CD8-positive, alpha-beta T cell (primary cell): ENCODE measurements at regions of chr17 and their contacts with region 1.

Region 1: DNA sequence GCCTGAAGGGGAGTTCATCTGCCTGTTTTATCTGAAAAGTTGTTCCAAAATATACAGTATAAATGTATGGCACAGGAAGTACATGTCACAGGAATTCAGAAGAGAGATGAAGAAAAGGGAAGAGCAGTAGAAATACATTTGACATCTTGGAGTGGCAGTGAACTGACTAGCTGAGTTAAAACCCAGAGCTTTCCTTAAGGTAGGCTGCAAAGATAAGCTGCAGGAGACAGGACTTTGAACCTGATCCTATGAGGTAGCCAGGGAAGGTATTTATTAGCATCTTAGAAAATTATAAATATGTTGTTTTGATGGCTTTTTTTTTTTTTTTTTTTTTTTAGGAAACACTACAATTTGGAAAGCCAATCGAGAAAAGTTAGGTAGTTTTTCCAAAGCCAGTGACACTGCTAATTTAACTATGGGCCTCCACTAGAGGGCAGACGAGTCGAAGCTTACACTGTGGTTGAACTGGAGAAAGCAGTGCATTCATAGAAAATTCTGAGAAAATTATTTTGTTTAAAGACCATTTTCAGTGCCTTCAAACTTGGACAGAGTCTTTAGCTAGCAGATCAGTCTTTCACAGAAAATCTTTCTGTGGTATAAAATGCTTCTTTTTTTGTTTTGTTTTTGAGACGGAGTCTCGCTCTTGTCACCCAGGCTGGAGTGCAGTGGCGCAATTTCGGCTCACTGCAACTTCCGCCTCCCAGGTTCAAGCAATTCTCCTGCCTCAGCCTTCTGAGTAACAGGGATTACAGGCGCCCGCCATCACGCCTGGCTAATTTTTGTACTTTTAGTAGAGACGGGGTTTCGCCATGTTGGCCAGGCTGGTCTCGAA is 122.3 kb downstream of the SSH2 start:
- DNase-seq: peak; percentile 30 to 81 (median 73)
- ATAC-seq: peak; percentile 81
- H3K4me3 ChIP-seq: no peak overlapping the region
- H3K4me3 Mint-ChIP-seq: no peak overlapping the region
- H3K27ac ChIP-seq: no peak overlapping the region
- H3K27ac Mint-ChIP-seq: no peak overlapping the region
- H3K4me1 ChIP-seq: no peaks in the 10 kb centered on the region
- H3K4me1 Mint-ChIP-seq: peaks cover 15% of the 10 kb centered on the region
- H3K27me3 ChIP-seq: no peaks in the 10 kb centered on the region
- H3K27me3 Mint-ChIP-seq: no peaks in the 10 kb centered on the region
- CTCF ChIP-seq: peak; percentile 94

Region 2: GRCh38 chr17:29821897-29822296 is 14.2 kb after region 1 on chr17:
- CTCF ChIA-PET with region 1: interaction called, 16 read pairs
- POLR2A ChIA-PET with region 1: no interaction called
- intact Hi-C with region 1: no loop called
- DNase-seq: no peak
- ATAC-seq: no peak
- H3K4me3 ChIP-seq: no peak overlapping the region
- H3K4me3 Mint-ChIP-seq: no peak overlapping the region
- H3K27ac ChIP-seq: no peak overlapping the region
- H3K27ac Mint-ChIP-seq: no peak overlapping the region
- H3K4me1 ChIP-seq: peaks cover 4% of the 10 kb centered on the region
- H3K4me1 Mint-ChIP-seq: peaks cover 20% of the 10 kb centered on the region
- H3K27me3 ChIP-seq: no peaks in the 10 kb centered on the region
- H3K27me3 Mint-ChIP-seq: no peaks in the 10 kb centered on the region
- CTCF ChIP-seq: no peak

Region 3: DNA sequence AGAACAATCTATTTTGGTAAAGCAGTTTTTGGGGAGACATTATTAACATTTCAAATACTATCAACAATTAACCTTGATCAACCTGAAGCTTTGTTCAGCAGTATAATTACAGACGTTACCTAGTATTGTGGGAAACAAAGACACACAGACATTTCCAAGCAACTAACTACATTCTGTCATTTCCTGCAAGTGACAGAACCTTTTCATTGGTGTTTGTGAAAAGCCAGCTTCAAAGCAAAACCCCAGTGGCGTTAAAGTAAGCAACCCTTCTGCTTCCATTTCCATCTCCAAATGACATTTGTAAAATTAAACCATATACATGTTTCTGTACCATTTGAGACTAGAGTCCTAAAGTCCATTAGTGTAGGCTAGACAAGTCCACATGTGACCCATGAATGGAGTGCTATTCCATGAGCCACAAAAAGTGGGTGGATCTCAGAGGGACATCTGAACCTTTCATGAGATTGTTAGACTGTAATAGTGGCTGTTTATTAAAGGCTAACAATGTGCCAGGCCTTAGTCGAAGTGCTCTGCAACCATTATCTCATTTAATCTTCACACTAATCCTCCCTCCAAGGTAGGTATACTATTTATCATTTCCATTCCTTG is 21.0 kb after region 1 on chr17:
- CTCF ChIA-PET with region 1: interaction called, 14 read pairs
- POLR2A ChIA-PET with region 1: no interaction called
- intact Hi-C with region 1: no loop called
- DNase-seq: peak in 3 of 9 experiments; percentile 14 to 60 (median 22)
- ATAC-seq: peak; percentile 76
- H3K4me3 ChIP-seq: no peak overlapping the region
- H3K4me3 Mint-ChIP-seq: no peak overlapping the region
- H3K27ac ChIP-seq: no peak overlapping the region
- H3K27ac Mint-ChIP-seq: peak overlapping the region; percentile 82
- H3K4me1 ChIP-seq: peaks cover 12% of the 10 kb centered on the region
- H3K4me1 Mint-ChIP-seq: peaks cover 54% of the 10 kb centered on the region
- H3K27me3 ChIP-seq: no peaks in the 10 kb centered on the region
- H3K27me3 Mint-ChIP-seq: no peaks in the 10 kb centered on the region
- CTCF ChIP-seq: no peak

Region 4: GRCh38 chr17:29924786-29925185 is 117.0 kb after region 1 on chr17:
- CTCF ChIA-PET with region 1: interaction called, 299 read pairs
- POLR2A ChIA-PET with region 1: interaction called, 26 read pairs
- intact Hi-C with region 1: no loop called
- DNase-seq: no peak
- ATAC-seq: no peak
- H3K4me3 ChIP-seq: no peak overlapping the region
- H3K4me3 Mint-ChIP-seq: no peak overlapping the region
- H3K27ac ChIP-seq: no peak overlapping the region
- H3K27ac Mint-ChIP-seq: no peak overlapping the region
- H3K4me1 ChIP-seq: peaks cover 11% of the 10 kb centered on the region
- H3K4me1 Mint-ChIP-seq: peaks cover 40% of the 10 kb centered on the region
- H3K27me3 ChIP-seq: no peaks in the 10 kb centered on the region
- H3K27me3 Mint-ChIP-seq: no peaks in the 10 kb centered on the region
- CTCF ChIP-seq: no peak

Region 5: GRCh38 chr17:30000001-30000754 is 192.4 kb after region 1 on chr17:
- CTCF ChIA-PET with region 1: interaction called, 5 read pairs
- POLR2A ChIA-PET with region 1: no interaction called
- intact Hi-C with region 1: loop called in 1 of 2 experiments (anchors 1 kb)
- DNase-seq: peak in 1 of 9 experiments; percentile 5
- ATAC-seq: no peak
- H3K4me3 ChIP-seq: no peak overlapping the region
- H3K4me3 Mint-ChIP-seq: peak overlapping the region; percentile 32
- H3K27ac ChIP-seq: no peak overlapping the region
- H3K27ac Mint-ChIP-seq: no peak overlapping the region
- H3K4me1 ChIP-seq: no peaks in the 10 kb centered on the region
- H3K4me1 Mint-ChIP-seq: peaks cover 9% of the 10 kb centered on the region
- H3K27me3 ChIP-seq: no peaks in the 10 kb centered on the region
- H3K27me3 Mint-ChIP-seq: no peaks in the 10 kb centered on the region
- CTCF ChIP-seq: no peak

Region 6: GRCh38 chr17:30021708-30022317 is 214.1 kb after region 1 on chr17:
- CTCF ChIA-PET with region 1: interaction called, 11 read pairs
- POLR2A ChIA-PET with region 1: no interaction called
- intact Hi-C with region 1: loop called (anchors 1 kb)
- DNase-seq: peak in 6 of 9 experiments; percentile 3 to 68 (median 31)
- ATAC-seq: peak; percentile 76
- H3K4me3 ChIP-seq: no peak overlapping the region
- H3K4me3 Mint-ChIP-seq: no peak overlapping the region
- H3K27ac ChIP-seq: no peak overlapping the region
- H3K27ac Mint-ChIP-seq: no peak overlapping the region
- H3K4me1 ChIP-seq: no peaks in the 10 kb centered on the region
- H3K4me1 Mint-ChIP-seq: peaks cover 2% of the 10 kb centered on the region
- H3K27me3 ChIP-seq: no peaks in the 10 kb centered on the region
- H3K27me3 Mint-ChIP-seq: peaks cover 5% of the 10 kb centered on the region
- CTCF ChIP-seq: peak; percentile 88